PC-3 (cell line): ENCODE measurements at regions of chr15 and their contacts with region 1.

Region 1: DNA sequence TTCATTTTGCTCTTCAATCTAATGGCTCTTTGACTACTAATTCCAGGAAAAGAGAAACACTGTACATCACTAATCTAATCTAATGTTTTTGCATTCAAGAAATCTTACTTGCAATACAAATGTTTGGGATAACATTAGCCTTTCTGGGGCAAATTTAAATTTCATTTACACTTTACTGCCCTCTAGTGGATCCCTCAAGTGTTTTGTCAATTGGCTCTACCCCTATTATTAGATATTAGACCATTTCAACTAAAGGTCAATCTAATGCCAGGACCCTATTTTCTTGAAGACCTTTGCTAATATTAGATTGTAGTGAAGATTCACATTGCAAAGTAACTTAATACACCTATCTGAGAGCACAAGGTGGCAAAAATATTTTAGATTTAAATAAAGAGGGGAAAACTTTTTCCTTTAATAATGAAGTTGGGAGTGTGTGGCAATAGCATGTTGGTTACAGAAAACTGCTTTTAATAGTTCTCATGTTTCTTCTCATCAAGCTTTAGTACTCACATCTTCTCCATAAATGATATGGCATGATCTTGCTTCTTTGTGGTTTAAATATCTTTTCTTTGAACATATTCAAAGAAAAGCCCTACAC is 5.0 kb downstream of the C2CD4A start:
- DNase-seq: peak; percentile 60
- ATAC-seq: no peak
- H3K4me3 ChIP-seq: no peak overlapping the region
- H3K27ac ChIP-seq: no peak overlapping the region
- H3K4me1 ChIP-seq: peaks cover 25% of the 10 kb centered on the region
- H3K27me3 ChIP-seq: peaks cover 7% of the 10 kb centered on the region
- CTCF ChIP-seq: peak; percentile 72

Region 2: DNA sequence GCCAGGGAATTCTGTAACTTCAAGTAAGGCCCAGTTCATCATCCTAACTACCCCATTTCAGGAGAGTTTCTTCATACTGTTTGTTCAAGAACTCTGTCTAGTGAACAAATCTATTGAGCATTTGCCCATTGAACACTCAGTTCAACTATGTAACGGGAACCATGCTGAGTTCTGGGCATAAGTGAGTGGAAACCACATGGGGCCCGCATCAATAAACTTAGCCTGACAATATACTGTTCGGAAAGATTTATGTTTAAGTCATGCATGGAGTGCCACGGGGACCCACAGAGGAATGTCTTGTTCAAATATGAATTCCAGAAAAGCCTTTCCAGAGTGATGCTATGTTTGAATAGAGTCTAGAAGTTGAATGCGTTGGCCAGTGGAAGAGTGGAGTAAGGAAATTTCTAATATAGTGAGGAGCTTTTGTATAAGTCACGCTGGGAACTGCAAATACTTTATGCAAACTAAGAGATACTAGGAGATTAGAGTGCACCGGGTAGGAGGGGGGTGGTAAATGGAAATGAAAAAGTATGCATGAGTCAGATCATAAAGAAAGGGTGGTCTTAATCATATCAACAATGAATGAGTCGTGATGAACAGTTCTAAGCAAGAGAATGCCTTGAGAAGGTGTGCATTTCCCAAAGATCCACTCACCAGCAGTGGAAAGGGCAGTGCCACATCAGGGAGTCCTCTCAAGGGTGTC is 291.4 kb before region 1 on chr15:
- CTCF ChIA-PET with region 1: no interaction called
- POLR2A ChIA-PET with region 1: no interaction called
- intact Hi-C with region 1: no loop called
- DNase-seq: no peak
- ATAC-seq: no peak
- H3K4me3 ChIP-seq: no peak overlapping the region
- H3K27ac ChIP-seq: no peak overlapping the region
- H3K4me1 ChIP-seq: no peaks in the 10 kb centered on the region
- H3K27me3 ChIP-seq: peaks cover 57% of the 10 kb centered on the region
- CTCF ChIP-seq: no peak

Region 3: GRCh38 chr15:61871926-61872522 is 199.8 kb before region 1 on chr15:
- CTCF ChIA-PET with region 1: no interaction called
- POLR2A ChIA-PET with region 1: no interaction called
- intact Hi-C with region 1: loop called (anchors 1 kb)
- DNase-seq: peak; percentile 45
- ATAC-seq: no peak; the same call in 1 of the 2 replicates
- H3K4me3 ChIP-seq: no peak overlapping the region
- H3K27ac ChIP-seq: no peak overlapping the region
- H3K4me1 ChIP-seq: no peaks in the 10 kb centered on the region
- H3K27me3 ChIP-seq: no peaks in the 10 kb centered on the region
- CTCF ChIP-seq: peak; percentile 78

Region 4: DNA sequence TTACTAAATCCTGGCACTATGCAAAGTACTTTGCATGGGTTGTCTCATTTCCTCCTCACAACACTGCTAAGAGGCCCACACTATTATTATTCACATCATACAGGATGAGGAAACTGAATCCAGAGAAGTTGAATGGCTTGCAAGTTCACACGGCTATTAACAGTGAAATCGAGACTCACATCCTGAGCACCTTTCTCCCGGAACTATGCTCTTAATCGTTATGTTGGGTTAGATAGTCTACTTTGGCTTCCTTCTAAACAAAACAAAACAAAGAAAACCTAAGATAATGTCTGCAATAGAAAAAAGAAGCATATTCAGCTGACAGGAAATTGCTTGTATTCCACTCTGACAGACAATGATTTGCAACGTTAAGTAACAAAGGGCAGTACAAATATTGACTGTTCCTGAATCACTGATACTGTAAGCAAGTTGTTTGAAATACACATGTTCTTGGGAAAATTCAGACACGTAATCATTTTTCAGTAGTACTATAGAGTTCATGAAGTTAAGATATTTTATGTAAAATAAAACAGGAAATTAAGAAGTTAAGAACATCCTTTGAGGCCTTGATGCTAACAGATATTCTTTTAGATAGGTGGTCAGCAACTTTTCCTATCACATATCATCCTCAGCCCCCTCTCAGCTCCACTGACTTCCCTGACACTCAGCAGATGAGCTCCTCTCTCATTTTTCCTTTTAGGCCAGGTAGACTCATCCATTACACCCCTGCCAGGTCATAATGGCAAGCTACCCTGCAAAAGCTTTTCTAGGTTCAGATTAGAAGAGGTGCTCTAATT is 52.6 kb after region 1 on chr15:
- CTCF ChIA-PET with region 1: no interaction called
- POLR2A ChIA-PET with region 1: no interaction called
- intact Hi-C with region 1: loop called (anchors 5 kb)
- DNase-seq: peak; percentile 63
- ATAC-seq: peak; percentile 80
- H3K4me3 ChIP-seq: peak overlapping the region; percentile 41; the same call in 1 of the 2 replicates
- H3K27ac ChIP-seq: peak overlapping the region; percentile 90
- H3K4me1 ChIP-seq: peaks cover 28% of the 10 kb centered on the region
- H3K27me3 ChIP-seq: no peaks in the 10 kb centered on the region
- CTCF ChIP-seq: no peak

Region 5: GRCh38 chr15:62142731-62143130 is 70.9 kb after region 1 on chr15:
- CTCF ChIA-PET with region 1: no interaction called
- POLR2A ChIA-PET with region 1: no interaction called
- intact Hi-C with region 1: loop called (anchors 1 kb)
- DNase-seq: peak; percentile 38
- ATAC-seq: no peak
- H3K4me3 ChIP-seq: no peak overlapping the region
- H3K27ac ChIP-seq: no peak overlapping the region
- H3K4me1 ChIP-seq: peaks cover 20% of the 10 kb centered on the region
- H3K27me3 ChIP-seq: no peaks in the 10 kb centered on the region
- CTCF ChIP-seq: peak; percentile 68

Region 6: DNA sequence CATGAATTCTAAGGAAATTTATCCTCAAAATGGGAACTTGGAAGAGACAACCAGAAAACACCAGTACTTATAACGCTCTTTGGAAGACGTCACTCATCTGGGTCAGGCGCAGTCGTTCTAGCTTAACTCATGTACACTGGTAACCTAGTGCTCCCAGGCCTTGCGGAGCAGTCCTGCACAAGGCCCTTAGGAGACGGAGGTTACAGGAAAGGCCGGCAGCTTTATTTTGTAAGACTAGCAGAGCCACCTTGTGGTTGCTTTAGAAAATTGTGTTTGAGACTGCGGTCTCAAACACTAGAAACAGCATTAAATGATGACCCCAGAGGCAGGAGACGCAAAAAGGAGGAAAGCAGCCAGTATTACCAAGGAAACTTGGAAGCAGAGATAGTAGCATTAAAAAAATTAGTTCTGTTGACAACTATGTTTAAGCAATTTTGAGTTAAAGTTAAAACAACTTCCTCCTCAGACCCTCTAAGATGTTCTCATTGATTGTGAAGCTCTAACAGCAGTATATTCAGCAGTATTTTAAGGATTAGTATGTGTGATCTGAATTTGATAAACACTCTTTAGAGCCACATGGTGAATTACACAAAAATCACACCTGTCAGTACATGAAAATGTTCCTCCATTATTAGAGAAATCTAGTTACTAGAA is 235.2 kb after region 1 on chr15:
- CTCF ChIA-PET with region 1: no interaction called
- POLR2A ChIA-PET with region 1: no interaction called
- intact Hi-C with region 1: loop called (anchors 5 kb)
- DNase-seq: peak; percentile 69
- ATAC-seq: peak; percentile 95
- H3K4me3 ChIP-seq: no peak overlapping the region
- H3K27ac ChIP-seq: no peak overlapping the region
- H3K4me1 ChIP-seq: peaks cover 10% of the 10 kb centered on the region; the same call in 1 of the 2 replicates
- H3K27me3 ChIP-seq: peaks cover 8% of the 10 kb centered on the region; the same call in 1 of the 2 replicates
- CTCF ChIP-seq: peak; percentile 73